Esophagus muscularis mucosa (tissue), 4 donors: ENCODE measurements at regions of chr7 and their contacts with region 1.

Region 1: DNA sequence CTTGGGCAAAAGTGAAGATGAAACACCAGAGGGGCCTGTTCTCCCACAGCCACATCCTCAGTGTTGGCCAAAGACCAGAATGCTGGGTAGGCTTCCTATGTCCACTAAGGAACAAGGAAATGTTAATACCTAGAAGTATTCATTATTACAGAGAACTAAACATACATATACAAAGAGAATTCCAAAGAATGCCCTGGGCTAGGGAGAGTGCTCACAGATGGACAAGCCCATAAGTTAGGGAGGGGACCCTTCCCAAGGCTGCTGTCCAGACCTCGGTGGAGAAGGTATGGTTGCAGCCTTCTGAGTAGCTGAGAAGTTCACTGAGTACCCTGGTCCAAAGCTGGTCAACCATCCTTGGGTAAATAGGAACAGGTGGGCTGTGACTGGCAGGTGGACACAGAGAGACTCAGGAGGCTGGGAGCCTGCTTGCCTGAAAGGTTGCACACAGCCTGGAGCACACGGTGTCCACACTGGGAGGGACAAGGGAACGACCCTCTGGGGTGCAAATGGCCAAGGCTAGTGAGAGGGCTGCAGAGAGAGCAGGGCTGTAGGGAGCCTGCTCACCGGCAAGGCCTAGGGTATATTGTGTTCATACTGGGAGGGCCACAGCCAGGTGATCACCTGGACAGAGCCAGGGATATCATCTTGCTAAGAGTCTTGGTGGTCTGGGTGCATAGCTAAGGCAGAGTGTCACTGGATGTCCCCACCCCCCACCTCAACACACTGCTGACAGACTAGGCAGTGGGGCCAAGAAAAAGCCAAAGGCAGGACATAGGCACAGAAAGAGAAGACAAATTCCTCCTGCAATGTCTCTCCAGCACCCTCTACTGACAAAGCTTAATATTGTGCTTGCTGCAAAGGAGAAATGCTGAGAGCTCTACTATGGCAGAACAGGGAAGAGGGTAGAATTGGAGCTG is 40.3 kb downstream of the CPVL start:
- DNase-seq: no peak
- H3K4me3 ChIP-seq: no peak overlapping the region
- H3K27ac ChIP-seq: no peak overlapping the region
- H3K4me1 ChIP-seq: peaks cover 0 to 2% (median 0%) of the 10 kb centered on the region in 4 donors
- H3K27me3 ChIP-seq: no peaks in the 10 kb centered on the region
- CTCF ChIP-seq: peak; percentile 72 to 87 (median 74)
- EP300 ChIP-seq: no peak
- POLR2A ChIP-seq: no peak

Region 2: DNA sequence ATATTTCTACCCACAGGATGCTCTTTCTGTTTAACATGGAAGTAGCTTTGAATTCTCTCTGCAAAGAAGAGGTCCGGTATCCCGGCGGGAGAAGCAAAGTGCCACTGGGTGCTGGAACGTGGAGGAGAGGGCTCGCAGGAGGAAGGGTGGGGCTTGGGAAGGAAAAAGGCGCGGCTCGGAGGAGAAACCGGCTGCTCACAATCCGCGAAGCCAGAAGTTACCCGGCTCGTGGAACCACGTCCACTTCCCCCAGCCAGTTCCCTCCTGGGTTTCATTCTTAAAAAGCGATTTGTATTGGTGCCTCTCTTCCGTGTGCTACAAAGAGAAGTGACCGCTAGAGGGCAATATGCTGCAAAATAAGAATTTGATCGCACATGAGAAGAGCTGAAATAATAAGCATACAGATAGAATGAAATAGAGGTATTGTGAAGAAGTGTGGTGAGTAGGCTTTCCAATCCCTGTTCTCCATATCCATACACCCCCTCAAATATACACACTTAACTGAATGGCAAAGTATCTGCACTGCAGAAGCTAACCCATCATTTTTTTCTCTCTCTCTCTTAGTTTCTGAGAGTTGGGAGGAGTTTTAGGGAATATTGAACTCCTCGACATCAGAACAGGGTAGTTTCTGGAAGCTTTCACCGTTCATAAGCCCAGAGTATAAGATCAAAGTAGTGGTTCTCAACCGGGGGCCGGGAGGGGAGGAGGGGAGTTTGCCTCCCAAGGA is 179.0 kb before region 1 on chr7:
- intact Hi-C with region 1: loop called (anchors 2 kb)
- DNase-seq: no peak
- H3K4me3 ChIP-seq: peak overlapping the region; percentile 50 to 57 (median 54)
- H3K27ac ChIP-seq: peak overlapping the region in 3 of 4 donors; percentile 34 to 57 (median 36)
- H3K4me1 ChIP-seq: peaks cover 13 to 21% (median 20%) of the 10 kb centered on the region in 4 donors
- H3K27me3 ChIP-seq: peaks cover 0 to 6% (median 0%) of the 10 kb centered on the region in 4 donors
- CTCF ChIP-seq: peak; percentile 79 to 89 (median 85)
- EP300 ChIP-seq: no peak
- POLR2A ChIP-seq: no peak

Region 3: GRCh38 chr7:28955718-28956619 is 150.0 kb before region 1 on chr7:
- intact Hi-C with region 1: loop called (anchors 10 kb)
- DNase-seq: peak; percentile 90
- H3K4me3 ChIP-seq: peak overlapping the region; percentile 49 to 69 (median 58)
- H3K27ac ChIP-seq: peak overlapping the region; percentile 57 to 73 (median 61)
- H3K4me1 ChIP-seq: peaks cover 34 to 45% (median 37%) of the 10 kb centered on the region in 4 donors
- H3K27me3 ChIP-seq: peaks cover 14 to 60% (median 26%) of the 10 kb centered on the region in 4 donors
- CTCF ChIP-seq: peak; percentile 42 to 60 (median 58)
- EP300 ChIP-seq: no peak
- POLR2A ChIP-seq: no peak

Region 4: GRCh38 chr7:29071203-29071874 is 34.7 kb before region 1 on chr7:
- intact Hi-C with region 1: no loop called
- DNase-seq: no peak
- H3K4me3 ChIP-seq: no peak overlapping the region
- H3K27ac ChIP-seq: no peak overlapping the region
- H3K4me1 ChIP-seq: no peaks in the 10 kb centered on the region
- H3K27me3 ChIP-seq: no peaks in the 10 kb centered on the region
- CTCF ChIP-seq: no peak
- EP300 ChIP-seq: no peak
- POLR2A ChIP-seq: no peak